Gastrocnemius medialis (tissue), 4 donors: ENCODE measurements at regions of chr22 and their contacts with region 1.

Region 1: DNA sequence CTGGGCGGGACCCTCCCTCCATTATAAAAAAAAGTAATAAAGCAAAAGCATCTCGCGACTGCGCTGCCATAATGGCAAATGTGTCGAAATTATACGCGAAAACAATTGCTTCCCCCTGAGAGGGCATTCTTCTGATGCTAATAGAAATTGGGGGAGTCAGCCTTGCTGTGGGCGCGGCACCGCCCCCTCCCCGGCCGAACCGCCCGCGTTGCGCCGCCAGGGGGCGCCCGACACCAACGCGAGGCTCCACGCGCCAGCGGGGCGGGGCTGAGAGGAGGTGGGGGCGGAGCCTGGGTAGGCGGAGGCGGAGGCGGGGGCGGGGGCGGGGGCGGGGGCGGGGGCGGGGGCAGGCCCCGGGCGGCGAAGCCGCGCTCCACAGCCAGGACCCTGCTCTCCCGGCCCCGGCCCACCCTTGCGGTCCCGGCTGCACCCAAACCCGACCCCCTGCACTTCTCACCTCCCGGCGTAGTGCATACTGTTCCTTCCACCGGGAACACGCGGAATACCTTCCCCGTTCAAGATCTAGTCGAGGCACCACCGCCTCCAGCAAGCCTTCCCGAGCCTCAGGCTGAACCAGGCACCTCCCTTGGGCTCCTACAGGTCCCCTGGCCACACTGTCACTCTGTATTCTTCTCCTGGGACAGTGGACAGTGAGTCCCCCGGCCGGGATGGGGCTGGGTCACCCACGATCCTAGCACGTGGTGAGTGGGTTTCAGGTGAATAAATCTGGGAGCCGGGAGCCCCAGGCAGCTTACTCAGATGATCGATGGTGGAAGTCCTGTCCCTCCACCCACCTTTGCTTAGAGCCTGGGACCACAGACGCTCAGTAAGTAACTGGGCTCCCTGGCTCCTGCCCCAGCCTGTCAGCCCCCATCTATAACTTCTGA is 15.5 kb upstream of the UPK3A start:
- DNase-seq: peak; percentile 65 to 68
- ATAC-seq: peak; percentile 49 to 55
- H3K4me3 ChIP-seq: peak overlapping the region; percentile 61 to 75 (median 64)
- H3K27ac ChIP-seq: peak overlapping the region; percentile 88 to 100 (median 93)
- H3K4me1 ChIP-seq: peaks cover 43 to 45% of the 10 kb centered on the region in 2 donors
- H3K27me3 ChIP-seq: no peaks in the 10 kb centered on the region
- CTCF ChIP-seq: peak; percentile 80 to 99 (median 97)
- POLR2A ChIP-seq: peak in 1 of 2 donors; percentile 14

Region 2: DNA sequence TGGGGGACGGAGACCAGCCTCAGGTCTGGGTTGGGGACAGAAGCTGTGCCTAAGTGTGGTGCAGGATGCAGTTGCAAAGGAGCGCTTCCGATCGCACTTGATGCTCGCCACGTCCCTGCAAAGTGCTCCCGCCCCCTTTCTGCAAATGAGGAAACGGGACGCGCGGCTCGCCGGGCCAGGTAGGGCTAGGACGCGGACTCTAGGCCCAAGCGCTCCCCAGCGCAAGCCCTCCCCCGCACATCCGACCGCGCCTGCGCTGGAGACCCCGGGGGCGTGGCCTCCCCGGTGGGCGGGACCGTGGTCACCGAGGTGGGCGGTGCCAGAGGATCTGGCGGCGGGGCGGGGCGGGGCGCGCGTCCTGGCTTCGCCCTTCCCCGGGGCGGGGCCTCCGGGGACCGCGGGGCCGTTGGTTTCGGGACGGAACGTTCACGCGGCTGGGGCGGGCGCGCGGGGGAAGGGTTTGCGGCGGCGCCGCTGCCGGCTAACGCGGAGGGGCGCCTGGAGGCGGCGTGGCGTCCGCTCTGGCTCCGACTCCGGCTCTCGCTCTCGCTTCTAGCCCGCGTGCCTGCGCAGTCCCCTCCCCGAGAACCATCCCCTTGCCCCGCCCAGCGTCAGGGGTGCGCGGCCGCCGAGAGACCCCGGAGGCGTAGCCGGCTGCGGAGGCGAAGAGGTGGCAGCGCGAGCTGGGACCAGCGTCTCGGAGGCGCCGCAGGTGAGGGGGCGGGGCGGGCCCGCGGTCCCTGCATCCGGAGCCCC is 40.4 kb after region 1 on chr22 and contains the start of gene FAM118A:
- in situ Hi-C with region 1: no loop called
- intact Hi-C with region 1: loop called (anchors 2 kb)
- DNase-seq: peak; percentile 87 to 91
- ATAC-seq: peak; percentile 88 to 89
- H3K4me3 ChIP-seq: peak within 1 kb of the TSS; percentile 79 to 95 (median 89)
- H3K27ac ChIP-seq: peak within 1 kb of the TSS; percentile 89 to 97 (median 96)
- H3K4me1 ChIP-seq: peaks cover 8 to 14% of the 10 kb centered on the region in 2 donors
- H3K27me3 ChIP-seq: no peaks in the 10 kb centered on the region
- CTCF ChIP-seq: peak in 1 of 5 experiments; percentile 19
- POLR2A ChIP-seq: peak; percentile 97 to 99
- total RNA-seq, gene FAM118A: 4.1 to 30.0 (median 24.2) TPM

Region 3: GRCh38 chr22:45429981-45430775 is 161.0 kb after region 1 on chr22:
- in situ Hi-C with region 1: loop called in 3 of 4 experiments (anchors 5 kb)
- intact Hi-C with region 1: loop called (anchors 1 kb)
- DNase-seq: no peak
- ATAC-seq: no peak
- H3K4me3 ChIP-seq: no peak overlapping the region
- H3K27ac ChIP-seq: no peak overlapping the region
- H3K4me1 ChIP-seq: peaks cover 0 to 3% of the 10 kb centered on the region in 2 donors
- H3K27me3 ChIP-seq: no peaks in the 10 kb centered on the region
- CTCF ChIP-seq: no peak
- POLR2A ChIP-seq: no peak

Region 4: DNA sequence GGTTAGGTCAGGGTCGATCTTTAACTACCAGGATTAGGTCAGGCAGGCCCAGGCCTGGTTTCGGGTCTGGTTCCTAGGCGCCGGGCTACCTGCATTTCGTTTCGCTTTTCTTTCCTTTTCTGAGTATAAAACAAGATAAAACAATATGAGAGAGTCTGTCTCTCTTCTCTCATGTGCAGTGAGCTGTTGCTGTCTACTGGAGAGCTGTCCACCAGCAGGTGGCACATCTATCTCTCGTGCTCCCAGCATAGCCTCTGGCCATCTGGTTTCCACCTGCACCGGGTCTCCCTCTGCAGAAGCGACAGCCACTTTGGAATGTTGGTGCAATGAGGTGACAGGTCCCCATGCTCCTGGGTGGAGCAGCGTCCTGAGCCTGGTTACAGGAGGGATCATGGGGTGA is 171.9 kb after region 1 on chr22:
- in situ Hi-C with region 1: loop called in 3 of 4 experiments (anchors 5 kb)
- intact Hi-C with region 1: no loop called
- DNase-seq: peak in 1 of 2 donors; percentile 27
- ATAC-seq: peak; percentile 54 to 62
- H3K4me3 ChIP-seq: no peak overlapping the region
- H3K27ac ChIP-seq: no peak overlapping the region
- H3K4me1 ChIP-seq: no peaks in the 10 kb centered on the region
- H3K27me3 ChIP-seq: no peaks in the 10 kb centered on the region
- CTCF ChIP-seq: peak in 4 of 5 experiments; percentile 44 to 62 (median 56)
- POLR2A ChIP-seq: no peak

Region 5: DNA sequence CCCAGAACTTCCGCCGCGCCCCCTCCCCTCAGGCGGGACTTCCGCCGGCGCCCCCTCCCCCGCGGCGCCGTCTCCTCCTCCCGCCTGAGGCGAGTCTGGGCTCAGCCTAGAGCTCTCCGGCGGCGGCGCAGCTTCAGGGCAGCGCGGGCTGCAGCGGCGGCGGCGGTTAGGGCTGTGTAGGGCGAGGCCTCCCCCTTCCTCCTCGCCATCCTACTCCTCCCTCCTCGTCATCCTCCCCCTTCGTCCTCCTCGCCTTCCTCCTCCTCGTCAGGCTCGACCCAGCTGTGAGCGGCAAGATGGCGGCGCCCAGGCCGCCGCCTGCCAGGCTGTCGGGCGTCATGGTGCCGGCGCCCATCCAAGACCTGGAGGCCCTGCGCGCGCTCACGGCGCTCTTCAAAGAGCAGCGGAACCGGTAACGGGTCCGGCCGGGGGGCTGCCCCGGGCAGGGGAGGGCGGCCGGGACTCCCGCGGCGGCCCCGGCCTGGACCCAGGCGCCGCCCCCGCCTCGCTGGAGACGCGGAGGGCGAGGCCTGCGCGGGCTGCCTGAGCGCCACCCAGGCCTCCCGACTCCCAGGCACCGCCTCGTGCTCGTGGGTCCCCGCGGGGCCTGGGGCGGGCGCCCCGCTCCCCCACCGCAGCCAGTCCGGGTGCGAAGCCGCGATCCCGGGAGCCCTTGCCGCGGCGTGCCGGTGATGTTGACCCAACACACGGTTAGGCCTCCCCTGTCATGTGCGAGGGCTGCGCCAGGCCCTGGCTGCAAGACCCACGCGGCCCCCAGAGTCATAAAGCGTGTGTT is 402.8 kb after region 1 on chr22 and contains the start of gene ATXN10:
- in situ Hi-C with region 1: no loop called
- intact Hi-C with region 1: loop called (anchors 10 kb)
- DNase-seq: peak; percentile 19 to 33
- ATAC-seq: peak; percentile 78 to 83
- H3K4me3 ChIP-seq: peak within 1 kb of the TSS; percentile 79 to 94 (median 84)
- H3K27ac ChIP-seq: peak within 1 kb of the TSS; percentile 79 to 87 (median 80)
- H3K4me1 ChIP-seq: peaks cover 20 to 21% of the 10 kb centered on the region in 2 donors
- H3K27me3 ChIP-seq: no peaks in the 10 kb centered on the region
- CTCF ChIP-seq: no peak
- POLR2A ChIP-seq: no peak
- total RNA-seq, gene ATXN10: 52.9 to 98.9 (median 78.5) TPM